GM10248 (cell line): ENCODE measurements at regions of chr7 and their contacts with region 1.

Region 1: GRCh38 chr7:135211179-135211945 is at the start of gene WDR91:
- DNase-seq: peak; percentile 100
- CTCF ChIP-seq: peak; percentile 1

Region 2: GRCh38 chr7:135160098-135160857 is 51.1 kb before region 1 on chr7:
- CTCF ChIA-PET with region 1: no interaction called
- POLR2A ChIA-PET with region 1: no interaction called
- DNase-seq: no peak
- CTCF ChIP-seq: no peak

Region 3: DNA sequence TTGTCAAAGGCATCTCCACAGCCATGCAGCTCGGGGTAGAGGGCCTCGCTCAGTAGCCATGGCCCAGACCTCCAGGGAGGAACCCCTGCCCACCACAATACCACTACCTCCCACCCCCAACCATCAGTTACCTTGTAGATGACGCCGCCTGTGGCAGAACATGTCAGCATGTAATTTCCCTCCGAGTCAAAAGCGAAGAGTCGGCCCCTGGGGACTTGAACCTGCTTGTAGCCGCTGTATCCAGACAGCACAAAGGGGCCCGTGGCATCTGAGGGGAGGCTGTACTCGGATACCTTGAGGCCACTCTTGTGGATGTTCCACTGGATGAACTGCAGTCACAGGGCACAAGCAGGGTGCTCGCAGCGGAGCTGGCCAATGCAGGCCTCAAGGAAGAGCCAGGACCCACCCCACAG is 24.5 kb before region 1 on chr7:
- CTCF ChIA-PET with region 1: interaction called, 16 read pairs
- POLR2A ChIA-PET with region 1: interaction called, 18 read pairs
- DNase-seq: peak; percentile 80
- CTCF ChIP-seq: no peak

Region 4: DNA sequence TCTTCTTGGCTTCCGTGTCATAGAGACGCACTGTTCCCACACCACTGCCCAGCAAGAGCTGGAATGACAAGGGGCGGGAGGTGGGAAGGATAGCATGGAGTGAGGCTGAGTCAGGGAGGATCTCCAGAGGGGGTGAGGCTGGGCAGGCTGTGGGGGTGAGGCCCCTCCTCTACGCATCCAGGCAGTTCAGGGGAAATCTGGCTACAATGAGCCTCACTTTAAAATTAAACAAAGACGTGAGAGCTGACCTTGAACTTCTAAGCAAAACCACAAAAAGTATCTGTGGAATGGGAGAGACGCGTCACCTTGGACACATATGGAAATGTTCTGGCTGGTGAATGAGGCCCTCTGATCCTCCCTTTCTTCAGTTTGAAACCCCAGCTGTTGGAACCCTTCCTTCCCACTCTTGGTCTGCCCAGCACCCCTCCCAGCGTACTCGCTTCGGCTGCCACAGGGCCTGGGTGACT is 17.7 kb before region 1 on chr7:
- CTCF ChIA-PET with region 1: interaction called, 16 read pairs
- POLR2A ChIA-PET with region 1: interaction called, 18 read pairs
- DNase-seq: no peak
- CTCF ChIP-seq: no peak

Region 5: DNA sequence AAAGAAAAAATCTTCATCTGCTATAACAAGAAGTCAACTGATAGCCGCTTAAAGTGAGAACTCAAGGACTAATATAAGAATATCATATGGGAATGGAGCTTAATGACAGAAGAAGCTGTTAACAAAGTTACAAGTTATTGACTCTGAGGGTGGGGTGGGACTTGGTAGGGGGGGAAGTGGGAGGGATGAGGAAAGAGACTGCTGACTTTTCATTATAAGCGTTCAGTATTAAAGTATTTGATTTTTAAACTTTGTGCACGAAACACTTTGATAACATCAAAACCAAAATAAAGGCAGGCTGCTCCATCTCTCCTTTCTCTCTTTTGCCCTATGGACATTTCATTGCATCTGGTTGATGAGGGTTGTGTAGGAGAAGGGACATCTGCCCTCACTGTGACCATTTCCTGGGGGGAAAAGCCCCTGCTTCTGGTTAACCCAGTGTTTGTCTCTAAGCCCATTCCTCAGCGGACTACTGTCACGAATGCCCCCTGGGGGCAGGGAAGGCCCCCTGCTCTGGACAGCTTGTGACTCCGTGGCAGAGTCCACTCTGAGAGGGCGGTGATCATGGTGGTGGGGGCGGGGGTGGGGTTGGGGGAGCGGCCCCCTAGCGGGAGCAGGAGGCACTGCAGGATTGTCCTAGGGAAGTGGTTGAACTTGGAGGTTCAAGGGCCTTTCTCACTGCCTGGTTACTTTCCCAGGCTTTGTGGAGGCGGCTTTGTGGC is 499.2 kb after region 1 on chr7:
- CTCF ChIA-PET with region 1: no interaction called
- POLR2A ChIA-PET with region 1: no interaction called
- DNase-seq: peak; percentile 71
- CTCF ChIP-seq: peak; percentile 7